ENCODE measurements at regions of chr16 and their contacts with region 1.

Region 1: DNA sequence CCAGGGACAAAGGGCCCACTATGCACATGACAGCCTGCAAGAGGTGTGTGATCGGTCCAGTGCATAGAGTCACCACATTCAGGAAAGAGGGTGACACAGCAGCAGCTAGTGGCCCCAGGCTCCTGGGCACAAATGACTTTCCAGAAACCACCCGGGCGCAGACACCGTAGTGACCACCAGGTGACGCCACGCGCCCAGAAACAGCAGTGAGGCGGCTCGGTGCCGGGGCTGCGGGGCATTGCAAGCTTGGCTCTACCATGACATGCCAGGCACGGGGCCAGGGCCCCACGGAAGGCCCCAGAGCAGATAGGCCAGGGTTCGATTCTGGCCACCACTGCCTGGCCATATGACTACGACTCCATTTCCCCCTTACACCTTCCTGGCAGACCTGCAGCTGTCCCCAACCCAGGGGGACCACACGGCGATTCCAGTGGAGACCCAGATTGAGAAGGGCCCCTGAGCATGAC is 6.7 kb downstream of the RHBDF1 start:
- DNase-seq: peak; percentile 89
- H3K4me3 Mint-ChIP-seq: no peak overlapping the region
- H3K27ac Mint-ChIP-seq: no peak overlapping the region
- H3K4me1 Mint-ChIP-seq: peaks cover 2% of the 10 kb centered on the region
- H3K27me3 Mint-ChIP-seq: peaks cover 13% of the 10 kb centered on the region

Region 2: DNA sequence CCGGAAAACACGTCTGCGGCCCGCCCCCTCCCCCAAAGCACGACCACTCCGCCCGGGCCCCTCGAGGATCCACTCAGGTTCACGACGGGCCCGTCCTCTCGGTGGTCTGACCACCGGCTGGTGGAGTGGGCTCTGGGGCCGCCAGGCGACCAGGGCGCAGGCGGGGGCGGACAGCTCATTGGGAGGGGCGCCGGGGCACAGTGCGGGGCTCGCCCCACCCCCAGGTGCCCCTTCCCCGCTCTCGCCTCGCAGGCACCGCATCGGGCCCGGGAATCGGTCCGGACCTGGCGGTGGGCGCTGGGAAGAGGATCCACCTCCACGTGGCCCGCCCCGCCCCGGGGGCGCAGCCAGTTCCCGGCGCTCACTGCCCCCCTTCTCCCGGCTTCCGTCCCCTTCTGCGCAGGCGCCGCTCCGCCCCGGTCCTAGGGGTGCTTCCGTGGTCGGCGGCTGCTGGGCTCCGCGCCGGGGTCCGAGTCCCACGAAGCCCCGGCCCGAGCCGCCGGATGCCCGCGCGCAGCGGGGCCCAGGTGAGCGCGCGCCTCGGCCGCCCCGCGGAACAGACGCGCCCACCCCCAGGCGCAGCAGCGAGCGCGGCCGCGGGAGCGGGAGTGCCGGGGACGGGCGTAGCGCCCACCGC is 12.2 kb after region 1 on chr16 and contains the start of gene MPG:
- CTCF ChIA-PET with region 1: interaction called, 15 read pairs
- POLR2A ChIA-PET with region 1: interaction called, 16 read pairs
- DNase-seq: peak; percentile 85
- H3K4me3 Mint-ChIP-seq: peak within 1 kb of the TSS; percentile 84
- H3K27ac Mint-ChIP-seq: peak within 1 kb of the TSS; percentile 82
- H3K4me1 Mint-ChIP-seq: peaks cover 33% of the 10 kb centered on the region
- H3K27me3 Mint-ChIP-seq: peaks cover 18% of the 10 kb centered on the region
- total RNA-seq, gene MPG: 59.9 to 64.3 TPM

Region 3: DNA sequence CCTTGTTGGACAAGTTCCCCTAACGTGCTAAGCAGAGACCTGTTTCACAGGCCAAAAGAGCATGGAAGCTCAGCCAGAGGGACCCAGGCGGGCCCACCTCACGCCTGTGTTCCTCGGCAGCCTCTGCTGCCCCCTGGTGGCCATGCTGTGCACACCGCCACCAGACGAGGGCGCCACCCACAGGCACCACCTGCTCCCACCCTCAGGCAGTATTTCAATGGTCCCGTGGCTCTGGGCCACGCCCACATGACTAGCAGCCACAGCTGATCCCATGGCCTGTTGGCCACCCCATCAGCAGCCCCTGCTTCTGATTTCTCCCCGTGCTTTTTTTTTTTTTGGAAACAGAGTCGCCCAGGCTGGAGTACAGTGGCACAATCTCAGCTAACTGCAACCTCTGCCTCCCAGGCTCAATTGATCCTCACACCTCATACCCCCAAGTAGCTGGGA is 31.3 kb after region 1 on chr16:
- CTCF ChIA-PET with region 1: interaction called, 194 read pairs
- POLR2A ChIA-PET with region 1: interaction called, 23 read pairs
- DNase-seq: peak; percentile 92
- H3K4me3 Mint-ChIP-seq: no peak overlapping the region
- H3K27ac Mint-ChIP-seq: no peak overlapping the region
- H3K4me1 Mint-ChIP-seq: peaks cover 5% of the 10 kb centered on the region
- H3K27me3 Mint-ChIP-seq: no peaks in the 10 kb centered on the region

Measured in activated CD4-positive, alpha-beta memory T cell treated with anti-CD3 and anti-CD28 coated beads, Interleukin-2, amount 10 ng/mL, durations not matched to agents 7 days and 5 days (primary cell).